ENCODE measurements at regions of chr1 and their contacts with region 1.

Region 1: DNA sequence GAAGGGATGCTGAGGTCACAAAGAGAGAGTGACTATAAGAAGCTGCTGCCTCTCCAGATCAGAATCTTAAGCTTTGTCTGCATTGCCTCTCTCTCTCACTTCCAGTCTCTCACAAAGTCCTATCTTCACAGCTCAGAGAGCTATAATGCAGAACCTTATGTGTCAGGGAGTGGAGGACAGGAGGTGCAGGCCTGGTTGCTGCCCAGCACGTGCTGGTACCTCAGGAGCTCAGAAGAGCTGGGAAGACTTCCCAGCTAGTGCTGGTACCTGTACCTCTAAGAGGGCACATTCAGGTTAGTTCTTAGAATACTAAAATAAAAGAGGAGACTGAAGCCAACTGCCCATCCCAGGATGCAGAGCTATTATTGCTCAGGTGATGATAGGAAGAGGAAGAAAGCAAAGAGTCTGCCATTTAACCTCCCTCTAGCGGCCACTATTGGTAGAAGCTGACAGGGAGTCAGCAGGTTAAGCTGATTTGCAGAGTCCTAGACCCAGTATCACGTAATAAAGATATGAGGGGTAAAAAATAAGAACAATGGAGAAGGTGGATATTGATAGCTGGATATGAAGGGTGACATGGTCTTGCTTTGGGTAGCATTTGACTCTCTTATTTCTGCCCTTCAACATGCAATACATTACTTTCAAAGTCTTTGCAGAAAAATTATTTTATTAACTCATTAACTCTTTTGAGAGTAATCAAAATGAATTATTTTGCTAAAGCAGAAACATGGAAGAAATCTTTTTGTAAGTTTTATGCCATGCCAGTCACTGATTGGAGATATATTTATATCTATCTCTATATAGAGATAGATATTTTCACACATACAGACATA is 138.1 kb upstream of the HMCN1 start:
- DNase-seq: peak; percentile 78
- H3K4me3 Mint-ChIP-seq: no peak overlapping the region
- H3K27ac Mint-ChIP-seq: no peak overlapping the region
- H3K4me1 Mint-ChIP-seq: peaks cover 40% of the 10 kb centered on the region
- H3K27me3 Mint-ChIP-seq: no peaks in the 10 kb centered on the region
- CTCF ChIP-seq: peak; percentile 75

Region 2: GRCh38 chr1:185439727-185440415 is 156.2 kb before region 1 on chr1:
- CTCF ChIA-PET with region 1: interaction called, 6 read pairs
- intact Hi-C with region 1: loop called (anchors 2 kb)
- DNase-seq: peak; percentile 61
- H3K4me3 Mint-ChIP-seq: no peak overlapping the region
- H3K27ac Mint-ChIP-seq: no peak overlapping the region
- H3K4me1 Mint-ChIP-seq: no peaks in the 10 kb centered on the region
- H3K27me3 Mint-ChIP-seq: no peaks in the 10 kb centered on the region
- CTCF ChIP-seq: no peak

Region 3: GRCh38 chr1:185534801-185535200 is 61.2 kb before region 1 on chr1:
- CTCF ChIA-PET with region 1: no interaction called
- intact Hi-C with region 1: no loop called
- DNase-seq: no peak
- H3K4me3 Mint-ChIP-seq: no peak overlapping the region
- H3K27ac Mint-ChIP-seq: no peak overlapping the region
- H3K4me1 Mint-ChIP-seq: no peaks in the 10 kb centered on the region
- H3K27me3 Mint-ChIP-seq: no peaks in the 10 kb centered on the region
- CTCF ChIP-seq: no peak

Region 4: DNA sequence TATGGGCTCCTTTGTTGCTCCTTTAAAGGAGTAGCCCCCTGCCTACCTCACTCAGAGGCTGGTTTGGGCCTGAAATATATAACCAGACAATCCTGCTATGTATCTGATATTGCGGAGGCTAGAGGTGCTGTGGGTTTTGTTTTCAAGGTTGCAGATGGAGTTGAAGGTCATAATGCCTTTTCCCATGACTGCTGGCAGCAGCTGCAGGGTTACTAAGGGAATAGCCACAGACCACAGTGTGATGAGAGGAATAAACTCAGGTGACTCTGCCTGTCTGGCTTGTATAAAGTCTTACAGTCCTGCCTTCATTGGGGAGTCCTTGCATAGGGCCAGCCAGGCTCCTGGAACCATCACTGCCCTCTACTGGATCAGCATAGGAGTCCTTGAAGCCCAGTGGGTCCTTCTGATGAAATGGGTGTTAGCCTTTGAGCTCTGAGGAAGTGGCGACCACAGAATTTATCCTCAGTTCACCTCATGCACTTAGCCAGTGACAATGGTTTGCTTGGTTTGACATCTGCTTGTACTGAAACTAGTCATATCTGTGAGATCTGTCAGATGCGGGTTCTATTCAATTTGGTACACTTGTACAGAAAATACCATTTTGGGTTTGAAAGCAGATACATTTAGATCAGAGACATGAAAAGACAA is 36.2 kb before region 1 on chr1:
- CTCF ChIA-PET with region 1: interaction called, 9 read pairs
- intact Hi-C with region 1: loop called (anchors 5 kb)
- DNase-seq: peak; percentile 56
- H3K4me3 Mint-ChIP-seq: no peak overlapping the region
- H3K27ac Mint-ChIP-seq: no peak overlapping the region
- H3K4me1 Mint-ChIP-seq: peaks cover 47% of the 10 kb centered on the region
- H3K27me3 Mint-ChIP-seq: no peaks in the 10 kb centered on the region
- CTCF ChIP-seq: peak; percentile 26

Region 5: GRCh38 chr1:185566995-185567394 is 29.1 kb before region 1 on chr1:
- CTCF ChIA-PET with region 1: interaction called, 13 read pairs
- intact Hi-C with region 1: loop called (anchors 5 kb)
- DNase-seq: peak; percentile 28
- H3K4me3 Mint-ChIP-seq: peak overlapping the region; percentile 14
- H3K27ac Mint-ChIP-seq: peak overlapping the region; percentile 91
- H3K4me1 Mint-ChIP-seq: peaks cover 83% of the 10 kb centered on the region
- H3K27me3 Mint-ChIP-seq: no peaks in the 10 kb centered on the region
- CTCF ChIP-seq: no peak

Region 6: GRCh38 chr1:185646202-185646683 is 50.2 kb after region 1 on chr1:
- CTCF ChIA-PET with region 1: interaction called, 13 read pairs
- intact Hi-C with region 1: no loop called
- DNase-seq: peak; percentile 80
- H3K4me3 Mint-ChIP-seq: peak overlapping the region; percentile 6
- H3K27ac Mint-ChIP-seq: peak overlapping the region; percentile 30
- H3K4me1 Mint-ChIP-seq: peaks cover 53% of the 10 kb centered on the region
- H3K27me3 Mint-ChIP-seq: no peaks in the 10 kb centered on the region
- CTCF ChIP-seq: no peak

Region 7: GRCh38 chr1:185670187-185670627 is 74.2 kb after region 1 on chr1:
- CTCF ChIA-PET with region 1: interaction called, 8 read pairs
- intact Hi-C with region 1: loop called (anchors 5 kb)
- DNase-seq: peak; percentile 56
- H3K4me3 Mint-ChIP-seq: no peak overlapping the region
- H3K27ac Mint-ChIP-seq: no peak overlapping the region
- H3K4me1 Mint-ChIP-seq: peaks cover 12% of the 10 kb centered on the region
- H3K27me3 Mint-ChIP-seq: no peaks in the 10 kb centered on the region
- CTCF ChIP-seq: peak; percentile 39